ENCODE measurements at regions of chr17 and their contacts with region 1.

Region 1: DNA sequence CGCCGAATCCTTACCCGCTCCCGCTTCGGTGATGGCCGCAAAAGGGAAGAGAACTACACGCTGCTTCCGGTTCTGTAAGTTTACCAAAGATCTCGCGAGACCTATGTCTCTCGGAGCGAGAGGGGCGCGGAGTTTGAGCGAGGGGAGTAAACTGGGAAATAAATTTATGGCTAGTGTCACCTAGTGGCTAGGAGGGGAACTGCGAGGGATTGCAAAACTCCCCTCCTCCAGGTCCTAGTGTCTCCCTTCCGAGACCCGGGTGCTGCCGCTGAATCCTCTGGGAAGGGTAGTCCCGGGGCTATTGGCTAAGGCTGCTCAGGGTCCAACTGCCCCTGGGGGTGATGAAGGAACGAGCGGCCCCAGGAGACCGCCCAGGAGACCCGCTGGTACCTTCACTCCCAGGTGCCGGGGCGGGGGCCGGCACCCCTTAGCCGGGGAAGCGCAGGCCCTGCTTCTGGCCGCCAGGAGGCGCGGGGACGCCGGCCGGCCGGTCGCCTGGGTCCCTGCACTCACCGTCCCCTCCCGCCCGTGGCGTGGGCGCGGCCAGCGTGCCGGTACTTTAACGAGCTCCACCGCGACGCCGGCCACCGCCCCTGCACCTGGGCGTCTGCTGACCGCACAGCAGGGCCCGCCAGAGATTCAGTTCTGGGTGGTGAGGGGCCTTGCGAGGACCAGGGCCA is at the start of gene RPL26:
- DNase-seq: peak; percentile 82 to 100 (median 96)
- ATAC-seq: peak; percentile 87 to 91
- H3K4me3 Mint-ChIP-seq: peak within 1 kb of the TSS; percentile 92 to 100 (median 98)
- H3K27ac Mint-ChIP-seq: peak within 1 kb of the TSS; percentile 93 to 99 (median 96)
- H3K4me1 Mint-ChIP-seq: peaks cover 20 to 75% (median 67%) of the 10 kb centered on the region in 4 donors
- H3K27me3 Mint-ChIP-seq: no peaks in the 10 kb centered on the region
- polyA plus RNA-seq, gene RPL26: 1,685 to 2,097 (median 2,039) TPM

Region 2: GRCh38 chr17:8435245-8436168 is 52.2 kb after region 1 on chr17 and contains the start of gene NDEL1:
- POLR2A ChIA-PET with region 1: interaction called, 11 read pairs
- DNase-seq: peak; percentile 94 to 99 (median 99)
- ATAC-seq: peak; percentile 94 to 95
- H3K4me3 Mint-ChIP-seq: peak within 1 kb of the TSS; percentile 92 to 100 (median 96)
- H3K27ac Mint-ChIP-seq: peak within 1 kb of the TSS; percentile 83 to 100 (median 98)
- H3K4me1 Mint-ChIP-seq: peaks cover 11 to 44% (median 33%) of the 10 kb centered on the region in 4 donors
- H3K27me3 Mint-ChIP-seq: no peaks in the 10 kb centered on the region
- polyA plus RNA-seq, gene NDEL1: 40.3 to 56.8 (median 47.8) TPM

Region 3: DNA sequence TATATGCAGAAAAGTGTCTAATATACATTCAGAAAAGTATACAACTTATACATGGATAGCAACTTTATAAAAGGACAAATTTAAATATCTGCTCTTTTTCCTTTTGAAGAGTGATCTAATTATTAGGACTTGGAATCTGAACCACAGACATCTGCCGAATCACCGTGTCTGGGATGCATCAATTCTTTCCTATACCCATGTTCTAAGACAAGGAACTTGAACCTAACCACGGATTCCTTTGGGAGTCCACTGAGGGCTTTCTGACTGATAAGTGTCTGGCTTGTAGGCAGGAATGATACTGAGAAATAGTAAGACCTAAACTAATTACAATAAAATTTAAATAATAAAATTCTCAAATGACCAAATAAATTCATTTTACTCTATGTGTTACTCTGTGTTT is 106.6 kb after region 1 on chr17:
- POLR2A ChIA-PET with region 1: no interaction called
- DNase-seq: no peak
- ATAC-seq: no peak
- H3K4me3 Mint-ChIP-seq: no peak overlapping the region
- H3K27ac Mint-ChIP-seq: peak overlapping the region in 1 of 10 donors; percentile 12
- H3K4me1 Mint-ChIP-seq: peaks cover 0 to 14% (median 0%) of the 10 kb centered on the region in 4 donors
- H3K27me3 Mint-ChIP-seq: no peaks in the 10 kb centered on the region

Region 4: GRCh38 chr17:8532021-8532420 is 148.7 kb after region 1 on chr17:
- POLR2A ChIA-PET with region 1: no interaction called
- DNase-seq: no peak
- ATAC-seq: no peak
- H3K4me3 Mint-ChIP-seq: no peak overlapping the region
- H3K27ac Mint-ChIP-seq: no peak overlapping the region
- H3K4me1 Mint-ChIP-seq: no peaks in the 10 kb centered on the region
- H3K27me3 Mint-ChIP-seq: peaks cover 0 to 1% (median 0%) of the 10 kb centered on the region in 5 donors

Measured in naive thymus-derived CD8-positive, alpha-beta T cell (primary cell).